ENCODE measurements at regions of chr6 and their contacts with region 1.

Region 1: GRCh38 chr6:112680091-112680490 is 333.0 kb downstream of the RFPL4B start:
- DNase-seq: no peak
- H3K4me3 ChIP-seq: no peak overlapping the region
- H3K27ac ChIP-seq: no peak overlapping the region
- H3K4me1 ChIP-seq: no peaks in the 10 kb centered on the region
- H3K27me3 ChIP-seq: no peaks in the 10 kb centered on the region
- CTCF ChIP-seq: no peak
- POLR2A ChIP-seq: no peak

Region 2: GRCh38 chr6:112691289-112691688 is 11.2 kb after region 1 on chr6:
- CTCF ChIA-PET with region 1: interaction called, 10 read pairs
- POLR2A ChIA-PET with region 1: no interaction called
- dilution Hi-C with region 1: no loop called
- intact Hi-C with region 1: no loop called
- DNase-seq: peak; percentile 64
- H3K4me3 ChIP-seq: no peak overlapping the region
- H3K27ac ChIP-seq: peak overlapping the region; percentile 18
- H3K4me1 ChIP-seq: peaks cover 21% of the 10 kb centered on the region
- H3K27me3 ChIP-seq: no peaks in the 10 kb centered on the region
- CTCF ChIP-seq: no peak
- POLR2A ChIP-seq: no peak